B cell (primary cell): ENCODE measurements at regions of chr2 and their contacts with region 1.

Region 1: DNA sequence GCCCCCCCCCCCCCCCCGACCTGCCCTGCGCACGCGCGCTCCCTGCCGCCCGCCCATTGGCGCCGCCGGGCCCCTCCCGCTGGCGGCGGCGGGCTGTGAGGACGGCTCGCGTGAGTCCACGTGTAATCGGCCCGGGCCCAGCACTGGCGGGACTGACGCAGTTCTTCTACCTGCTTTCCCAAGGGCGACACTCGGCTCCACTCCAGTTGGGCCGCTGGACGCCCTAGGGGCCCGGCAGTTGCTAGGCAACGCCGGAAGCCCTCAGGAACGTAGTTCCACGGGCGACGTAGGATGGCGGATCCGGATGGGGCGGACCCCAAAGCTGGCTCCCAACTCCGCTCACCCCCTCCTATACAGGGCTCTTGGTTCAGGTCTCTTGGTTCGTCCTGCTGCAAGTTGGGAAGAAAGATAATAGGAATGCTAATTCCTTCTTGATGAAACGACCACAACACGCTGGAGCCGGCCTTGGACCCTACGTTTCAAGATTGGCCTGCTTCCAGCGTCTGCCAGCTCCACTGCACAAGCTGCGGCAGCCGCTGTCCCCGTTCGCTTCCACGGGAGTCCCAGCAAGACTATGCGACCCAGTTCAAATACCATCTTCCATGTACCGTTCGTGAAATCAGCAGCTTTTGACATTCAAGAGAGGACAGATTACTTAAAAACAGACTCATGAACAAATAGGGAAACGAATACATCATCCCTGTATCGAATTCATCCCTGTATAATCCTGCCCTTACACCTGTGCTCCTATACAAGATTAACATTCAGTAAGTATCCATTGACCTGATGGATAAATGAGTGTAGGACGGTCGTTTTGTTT is 415 bp upstream of the MCFD2 start:
- DNase-seq: peak; percentile 93
- ATAC-seq: peak; percentile 83
- H3K4me3 ChIP-seq: peak overlapping the region; percentile 88 to 98 (median 96)
- H3K4me3 Mint-ChIP-seq: peak overlapping the region; percentile 96
- H3K27ac ChIP-seq: peak overlapping the region; percentile 45 to 87
- H3K27ac Mint-ChIP-seq: peak overlapping the region; percentile 91
- H3K4me1 ChIP-seq: peaks cover 31 to 55% of the 10 kb centered on the region in 2 donors
- H3K4me1 Mint-ChIP-seq: peaks cover 63% of the 10 kb centered on the region
- H3K27me3 ChIP-seq: no peaks in the 10 kb centered on the region
- H3K27me3 Mint-ChIP-seq: no peaks in the 10 kb centered on the region
- CTCF ChIP-seq: no peak

Region 2: GRCh38 chr2:46929612-46930011 is 13.6 kb after region 1 on chr2:
- CTCF ChIA-PET with region 1: interaction called, 16 read pairs
- POLR2A ChIA-PET with region 1: no interaction called
- intact Hi-C with region 1: no loop called
- DNase-seq: no peak
- ATAC-seq: no peak
- H3K4me3 ChIP-seq: no peak overlapping the region
- H3K4me3 Mint-ChIP-seq: no peak overlapping the region
- H3K27ac ChIP-seq: no peak overlapping the region
- H3K27ac Mint-ChIP-seq: no peak overlapping the region
- H3K4me1 ChIP-seq: peaks cover 22 to 25% of the 10 kb centered on the region in 2 donors
- H3K4me1 Mint-ChIP-seq: peaks cover 30% of the 10 kb centered on the region
- H3K27me3 ChIP-seq: no peaks in the 10 kb centered on the region
- H3K27me3 Mint-ChIP-seq: no peaks in the 10 kb centered on the region
- CTCF ChIP-seq: no peak

Region 3: GRCh38 chr2:46979571-46979979 is 63.6 kb after region 1 on chr2:
- CTCF ChIA-PET with region 1: interaction called, 4 read pairs
- POLR2A ChIA-PET with region 1: interaction called, 4 read pairs
- intact Hi-C with region 1: loop called (anchors 1 kb)
- DNase-seq: peak; percentile 81
- ATAC-seq: peak; percentile 51
- H3K4me3 ChIP-seq: peak overlapping the region in 1 of 5 experiments; percentile 17
- H3K4me3 Mint-ChIP-seq: peak overlapping the region; percentile 83
- H3K27ac ChIP-seq: peak overlapping the region; percentile 62 to 83
- H3K27ac Mint-ChIP-seq: peak overlapping the region; percentile 93
- H3K4me1 ChIP-seq: peaks cover 80 to 84% of the 10 kb centered on the region in 2 donors
- H3K4me1 Mint-ChIP-seq: peaks cover 83% of the 10 kb centered on the region
- H3K27me3 ChIP-seq: no peaks in the 10 kb centered on the region
- H3K27me3 Mint-ChIP-seq: no peaks in the 10 kb centered on the region
- CTCF ChIP-seq: no peak

Region 4: GRCh38 chr2:46984642-46985476 is 68.8 kb after region 1 on chr2:
- CTCF ChIA-PET with region 1: interaction called, 4 read pairs
- POLR2A ChIA-PET with region 1: interaction called, 4 read pairs
- intact Hi-C with region 1: loop called (anchors 1 kb)
- DNase-seq: peak; percentile 52
- ATAC-seq: peak; percentile 7
- H3K4me3 ChIP-seq: peak overlapping the region in 2 of 5 experiments; percentile 5 to 60
- H3K4me3 Mint-ChIP-seq: peak overlapping the region; percentile 90
- H3K27ac ChIP-seq: peak overlapping the region; percentile 80 to 83
- H3K27ac Mint-ChIP-seq: peak overlapping the region; percentile 99
- H3K4me1 ChIP-seq: peaks cover 79 to 84% of the 10 kb centered on the region in 2 donors
- H3K4me1 Mint-ChIP-seq: peaks cover 88% of the 10 kb centered on the region
- H3K27me3 ChIP-seq: no peaks in the 10 kb centered on the region
- H3K27me3 Mint-ChIP-seq: no peaks in the 10 kb centered on the region
- CTCF ChIP-seq: no peak

Region 5: DNA sequence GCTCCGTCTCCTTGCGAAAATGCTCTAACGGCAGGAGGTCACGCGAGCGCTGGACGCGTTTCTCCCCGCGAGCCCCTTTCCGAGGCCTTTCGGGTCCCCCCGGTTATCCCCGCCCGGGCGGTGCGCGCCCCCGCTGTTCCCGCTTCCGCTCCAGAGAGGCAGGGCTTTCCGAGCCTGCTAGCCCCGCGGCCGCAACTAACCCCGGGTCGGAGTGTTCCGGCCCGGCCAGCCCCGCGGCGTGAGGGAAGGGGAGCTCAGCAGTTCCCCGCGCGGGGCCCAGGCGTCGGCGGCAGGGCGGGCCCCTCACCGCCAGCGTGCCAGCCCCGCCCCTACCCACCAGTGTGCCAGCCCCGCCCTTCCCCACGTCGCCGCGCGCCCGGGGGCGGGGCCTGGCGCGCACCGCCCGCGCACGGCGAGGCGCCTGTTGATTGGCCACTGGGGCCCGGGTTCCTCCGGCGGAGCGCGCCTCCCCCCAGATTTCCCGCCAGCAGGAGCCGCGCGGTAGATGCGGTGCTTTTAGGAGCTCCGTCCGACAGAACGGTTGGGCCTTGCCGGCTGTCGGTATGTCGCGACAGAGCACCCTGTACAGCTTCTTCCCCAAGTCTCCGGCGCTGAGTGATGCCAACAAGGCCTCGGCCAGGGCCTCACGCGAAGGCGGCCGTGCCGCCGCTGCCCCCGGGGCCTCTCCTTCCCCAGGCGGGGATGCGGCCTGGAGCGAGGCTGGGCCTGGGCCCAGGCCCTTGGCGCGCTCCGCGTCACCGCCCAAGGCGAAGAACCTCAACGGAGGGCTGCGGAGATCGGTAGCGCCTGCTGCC is 866.9 kb after region 1 on chr2 and contains the start of gene MSH6:
- CTCF ChIA-PET with region 1: no interaction called
- POLR2A ChIA-PET with region 1: no interaction called
- intact Hi-C with region 1: loop called (anchors 10 kb)
- DNase-seq: peak; percentile 95
- ATAC-seq: peak; percentile 87
- H3K4me3 ChIP-seq: peak within 1 kb of the TSS; percentile 80 to 98 (median 94)
- H3K4me3 Mint-ChIP-seq: peak within 1 kb of the TSS; percentile 95
- H3K27ac ChIP-seq: peak within 1 kb of the TSS; percentile 74 to 85
- H3K27ac Mint-ChIP-seq: peak within 1 kb of the TSS; percentile 94
- H3K4me1 ChIP-seq: peaks cover 14 to 26% of the 10 kb centered on the region in 2 donors
- H3K4me1 Mint-ChIP-seq: peaks cover 18% of the 10 kb centered on the region
- H3K27me3 ChIP-seq: no peaks in the 10 kb centered on the region
- H3K27me3 Mint-ChIP-seq: no peaks in the 10 kb centered on the region
- CTCF ChIP-seq: no peak
- total RNA-seq, gene MSH6: 43.9 and 46.9 TPM in 2 replicates